ENCODE measurements at regions of chr5 and their contacts with region 1.

Region 1: DNA sequence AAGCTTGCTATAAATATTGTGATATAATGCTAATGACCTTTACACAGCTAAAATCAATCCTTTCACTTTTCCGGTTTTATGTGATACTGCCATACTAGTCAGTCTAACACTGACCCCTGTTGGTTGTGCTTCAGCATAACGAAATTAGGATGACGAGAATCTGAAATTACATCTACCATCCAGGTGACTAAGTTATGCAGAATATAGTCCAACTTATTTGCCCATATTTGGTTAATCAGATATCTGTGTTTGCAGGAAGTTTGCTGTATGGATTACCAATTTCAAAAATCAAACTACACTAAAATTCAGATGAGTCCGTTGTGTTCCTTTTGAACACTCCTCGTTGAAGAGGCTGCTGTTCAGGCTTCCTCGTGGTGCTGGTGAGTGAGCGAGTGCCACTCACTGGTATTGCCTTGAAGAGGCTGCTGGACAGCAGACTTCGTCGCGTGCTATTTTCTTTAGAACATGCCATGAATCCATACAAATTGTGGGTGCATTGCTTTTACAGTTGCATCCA is 32.5 kb downstream of the TENT4A start:
- DNase-seq: peak; percentile 21
- H3K4me3 ChIP-seq: no peak overlapping the region
- H3K27ac ChIP-seq: no peak overlapping the region
- H3K27me3 ChIP-seq: no peaks in the 10 kb centered on the region
- CTCF ChIP-seq: peak; percentile 93

Region 2: DNA sequence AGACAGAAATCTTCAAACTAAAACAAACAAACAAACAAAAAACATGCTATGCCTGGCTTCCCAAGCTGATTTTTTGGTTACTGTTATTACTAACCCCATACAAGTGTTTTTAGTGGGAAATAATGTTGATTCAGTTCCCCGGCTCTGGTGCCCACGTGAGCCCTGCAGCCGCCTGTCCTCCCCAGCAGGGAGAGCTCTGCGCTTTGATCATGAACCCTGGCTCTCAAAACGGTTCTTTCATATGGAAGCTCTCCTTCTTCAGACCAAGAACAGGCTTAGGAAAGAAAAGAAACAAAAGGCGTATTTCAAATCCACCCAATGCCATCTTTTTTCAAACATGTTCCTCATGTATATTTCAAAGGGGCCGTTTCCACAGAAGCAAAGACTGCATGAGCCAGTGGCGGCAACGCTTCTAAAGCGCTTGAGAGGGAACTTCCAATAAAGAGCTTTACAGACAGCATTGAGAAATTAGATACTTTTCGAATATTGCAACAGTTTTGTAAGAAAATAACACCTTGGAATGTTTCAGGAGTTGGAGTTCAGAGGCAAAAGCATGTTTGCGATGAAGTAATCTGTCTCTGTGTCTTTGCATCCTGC is 1248.5 kb before region 1 on chr5:
- CTCF ChIA-PET with region 1: interaction called, 10 read pairs
- POLR2A ChIA-PET with region 1: no interaction called
- DNase-seq: no peak
- H3K4me3 ChIP-seq: no peak overlapping the region
- H3K27ac ChIP-seq: no peak overlapping the region
- H3K27me3 ChIP-seq: peaks cover 7% of the 10 kb centered on the region
- CTCF ChIP-seq: peak; percentile 80

Region 3: DNA sequence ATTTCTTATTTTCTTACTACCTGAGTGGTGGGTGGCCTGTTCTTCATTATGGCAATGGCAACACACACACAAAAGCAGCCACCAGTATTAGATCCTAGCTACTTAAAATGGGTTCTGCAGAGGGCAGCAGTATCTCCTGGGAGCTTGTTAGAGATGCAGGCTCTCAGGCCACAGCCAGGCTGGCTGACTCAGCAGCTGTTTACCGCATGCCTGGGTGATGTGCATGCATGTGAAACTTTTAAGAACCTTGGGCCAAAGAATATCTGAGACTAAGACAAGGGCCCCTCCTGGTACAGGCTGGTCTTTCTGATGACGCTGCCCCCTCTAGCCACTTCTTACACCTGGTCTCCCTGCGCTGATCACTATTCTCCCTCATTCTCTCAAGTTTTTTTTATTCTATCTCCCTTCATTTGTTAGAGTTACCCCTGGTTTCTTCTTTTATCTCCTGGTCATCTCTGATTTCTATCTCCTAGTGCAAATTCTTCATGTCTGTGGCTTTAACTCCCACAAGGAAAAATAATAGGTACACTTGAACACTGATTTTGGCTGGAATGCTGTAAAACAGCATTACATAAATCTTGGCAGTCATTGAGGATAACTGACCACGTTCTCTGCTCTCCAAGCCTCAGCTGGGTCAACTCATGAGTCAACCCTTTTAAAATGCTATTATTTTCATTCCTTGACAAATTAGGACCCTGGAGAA is 766.2 kb before region 1 on chr5:
- CTCF ChIA-PET with region 1: no interaction called
- POLR2A ChIA-PET with region 1: no interaction called
- DNase-seq: no peak
- H3K4me3 ChIP-seq: no peak overlapping the region
- H3K27ac ChIP-seq: no peak overlapping the region
- H3K27me3 ChIP-seq: no peaks in the 10 kb centered on the region
- CTCF ChIP-seq: no peak

Region 4: DNA sequence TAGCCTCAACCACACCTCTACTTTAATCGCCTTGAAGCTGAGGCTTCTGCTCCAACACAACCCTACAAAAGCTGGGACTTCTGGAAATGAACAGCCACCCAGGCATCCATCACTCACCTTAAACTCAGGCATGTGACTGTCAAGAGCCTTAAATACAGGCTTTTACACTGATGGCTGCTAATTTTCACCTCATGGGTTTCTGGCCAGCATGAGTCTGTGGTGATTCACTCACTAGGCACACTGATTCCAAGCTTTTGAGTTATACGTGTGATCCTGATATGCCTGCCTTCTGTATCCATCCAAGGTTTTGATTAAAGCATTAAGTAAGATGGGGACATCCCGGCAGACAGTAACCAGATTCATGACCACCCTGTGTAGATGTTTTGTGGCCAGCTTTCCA is 121.8 kb before region 1 on chr5:
- CTCF ChIA-PET with region 1: interaction called, 41 read pairs
- POLR2A ChIA-PET with region 1: no interaction called
- DNase-seq: no peak
- H3K4me3 ChIP-seq: no peak overlapping the region
- H3K27ac ChIP-seq: no peak overlapping the region
- H3K27me3 ChIP-seq: no peaks in the 10 kb centered on the region
- CTCF ChIP-seq: no peak

Region 5: DNA sequence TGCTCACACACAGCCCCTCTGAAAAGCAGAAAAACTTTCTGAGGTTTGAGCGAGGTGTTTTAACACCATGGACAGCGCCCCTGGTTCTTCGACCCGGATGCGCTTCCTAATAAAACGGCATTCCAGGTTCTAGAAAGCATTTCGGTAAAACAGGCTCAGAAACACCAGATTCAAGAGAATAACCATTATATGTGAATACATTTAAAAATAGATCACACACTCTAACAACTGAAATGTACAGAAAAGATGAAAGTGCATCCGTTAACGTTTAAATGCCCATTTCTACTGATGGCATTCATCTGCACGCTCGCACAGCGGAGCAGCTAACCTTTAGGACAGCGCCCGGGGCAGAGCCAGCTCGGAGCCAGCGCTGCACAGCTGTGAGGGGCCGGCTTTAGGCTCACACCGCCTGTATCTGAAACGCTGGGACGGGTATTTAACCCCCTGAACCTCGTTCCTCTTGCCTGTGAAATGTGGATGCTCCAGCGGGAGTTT is 58.8 kb before region 1 on chr5:
- CTCF ChIA-PET with region 1: interaction called, 10 read pairs
- POLR2A ChIA-PET with region 1: no interaction called
- DNase-seq: no peak
- H3K4me3 ChIP-seq: peak overlapping the region; percentile 48
- H3K27ac ChIP-seq: peak overlapping the region; percentile 21
- H3K27me3 ChIP-seq: no peaks in the 10 kb centered on the region
- CTCF ChIP-seq: no peak

Region 6: DNA sequence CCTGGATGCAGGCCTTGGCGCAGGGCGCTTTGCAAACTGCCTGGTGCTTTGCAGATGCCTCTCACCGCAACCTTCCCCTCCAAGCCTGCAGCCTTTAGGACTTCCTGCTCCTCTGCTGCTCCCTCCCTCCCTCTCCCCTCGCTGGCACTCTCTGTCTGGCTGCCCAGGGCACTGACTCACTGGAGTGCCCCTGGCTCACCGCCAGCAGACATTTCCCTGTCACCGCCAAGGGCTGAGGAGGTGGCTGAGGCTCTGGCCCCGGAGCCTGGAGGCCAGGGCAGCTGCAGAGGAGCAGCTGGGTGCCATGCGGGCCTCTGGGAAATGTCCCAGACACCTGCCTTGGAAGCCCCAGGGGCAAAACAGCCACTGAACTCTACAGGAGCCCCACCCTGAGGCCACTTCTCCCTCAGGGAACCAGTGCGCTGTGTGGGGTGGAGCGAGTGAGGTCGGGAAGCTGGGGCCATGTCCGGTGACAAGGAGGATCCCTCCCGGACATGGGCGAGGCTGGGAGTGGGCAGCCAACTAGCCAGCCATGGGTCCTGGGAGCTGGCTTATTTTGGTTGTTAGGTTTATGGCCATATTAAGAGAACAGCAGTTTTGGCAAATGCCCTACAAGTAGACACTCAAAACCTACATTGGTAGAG is 20.9 kb after region 1 on chr5:
- CTCF ChIA-PET with region 1: interaction called, 10 read pairs
- POLR2A ChIA-PET with region 1: no interaction called
- DNase-seq: no peak
- H3K4me3 ChIP-seq: no peak overlapping the region
- H3K27ac ChIP-seq: no peak overlapping the region
- H3K27me3 ChIP-seq: no peaks in the 10 kb centered on the region
- CTCF ChIP-seq: no peak

Measured in AG04450 (cell line).